ENCODE measurements at regions of chr1 and their contacts with region 1.

Region 1: DNA sequence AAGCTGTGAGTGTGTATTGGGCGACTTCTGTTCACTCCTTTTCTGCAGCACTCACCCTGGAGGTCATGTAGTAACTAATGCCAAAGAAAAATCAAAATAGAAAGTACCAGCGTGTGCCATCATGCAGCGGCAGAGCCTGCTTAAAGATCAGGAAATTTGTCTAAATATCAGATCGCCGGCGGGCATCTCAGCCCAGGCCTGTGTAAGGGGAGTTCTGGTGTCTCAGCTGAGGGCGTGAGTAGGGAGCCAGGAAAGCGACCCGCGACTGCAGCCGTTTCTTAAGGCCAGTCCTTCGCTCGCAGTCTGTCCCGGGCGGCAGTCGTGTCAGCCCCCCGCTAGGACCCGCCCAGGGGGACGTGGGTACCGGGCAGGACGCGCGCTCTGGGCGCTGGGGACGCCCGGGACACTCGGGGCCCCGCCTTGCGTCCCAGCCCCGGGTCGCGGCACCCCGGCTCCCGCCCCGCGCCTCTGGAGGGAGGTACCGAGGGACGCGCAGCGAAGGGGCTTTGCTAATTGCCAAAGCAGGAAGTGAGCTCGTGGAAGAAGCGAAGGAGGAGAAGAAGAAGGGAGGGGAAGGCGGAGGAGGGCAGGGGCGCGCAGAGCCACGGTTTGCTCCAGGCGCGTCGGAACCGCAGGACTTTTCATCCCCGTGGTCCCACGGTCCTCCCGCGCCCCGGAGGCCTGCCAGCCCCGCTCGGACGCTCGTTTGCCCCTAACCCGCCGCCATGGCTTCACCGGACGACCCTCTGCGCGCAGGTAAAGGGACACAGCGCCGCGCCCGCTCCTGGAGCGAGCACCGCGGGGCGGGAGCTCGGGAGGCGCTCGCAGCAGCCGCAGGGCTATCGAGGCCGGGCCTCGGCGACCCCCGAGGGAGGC is 1.1 kb downstream of the EDARADD start:
- DNase-seq: peak in 4 of 5 donors; percentile 40 to 81 (median 60)
- H3K4me3 ChIP-seq: peak overlapping the region; percentile 79
- H3K4me3 Mint-ChIP-seq: peak overlapping the region; percentile 89 to 99 (median 95)
- H3K27ac ChIP-seq: peak overlapping the region; percentile 82
- H3K27ac Mint-ChIP-seq: peak overlapping the region; percentile 68 to 99 (median 96)
- H3K4me1 ChIP-seq: peaks cover 17% of the 10 kb centered on the region
- H3K4me1 Mint-ChIP-seq: peaks cover 38 to 55% (median 51%) of the 10 kb centered on the region in 3 donors
- H3K27me3 ChIP-seq: no peaks in the 10 kb centered on the region
- H3K27me3 Mint-ChIP-seq: peaks cover 0 to 29% of the 10 kb centered on the region in 2 donors

Region 2: DNA sequence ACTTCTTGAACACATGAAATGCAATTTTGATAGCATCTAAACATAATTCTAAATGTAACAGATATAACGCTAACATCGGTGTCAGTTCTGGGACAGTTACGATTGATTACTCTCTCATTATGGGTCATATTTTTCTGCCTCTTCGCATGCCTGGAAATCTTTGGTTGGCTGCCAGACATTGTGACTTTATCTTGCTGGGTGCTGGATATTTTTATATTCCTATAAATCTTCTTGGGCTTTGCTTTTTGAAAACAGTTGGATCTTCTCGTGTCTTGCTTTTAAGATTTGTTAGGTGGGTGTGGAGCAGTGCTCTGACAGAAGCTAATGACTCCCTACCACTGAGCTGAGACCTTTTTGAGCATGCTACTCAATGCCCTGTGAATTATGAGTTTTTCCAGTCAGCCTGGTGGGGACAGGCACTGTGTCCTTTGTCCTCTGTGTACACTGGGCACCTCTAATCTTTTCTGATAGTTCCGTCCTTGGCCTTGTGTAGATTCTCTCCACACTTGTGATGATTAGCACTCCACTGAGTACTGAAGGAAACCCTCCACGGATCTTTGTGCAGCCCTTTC is 29.1 kb before region 1 on chr1:
- CTCF ChIA-PET with region 1: no interaction called
- POLR2A ChIA-PET with region 1: no interaction called
- DNase-seq: no peak
- H3K4me3 ChIP-seq: no peak overlapping the region
- H3K4me3 Mint-ChIP-seq: no peak overlapping the region
- H3K27ac ChIP-seq: no peak overlapping the region
- H3K27ac Mint-ChIP-seq: peak overlapping the region in 1 of 8 donors; percentile 44
- H3K4me1 ChIP-seq: no peaks in the 10 kb centered on the region
- H3K4me1 Mint-ChIP-seq: no peaks in the 10 kb centered on the region
- H3K27me3 ChIP-seq: no peaks in the 10 kb centered on the region
- H3K27me3 Mint-ChIP-seq: peaks cover 0 to 1% of the 10 kb centered on the region in 2 donors

Region 3: DNA sequence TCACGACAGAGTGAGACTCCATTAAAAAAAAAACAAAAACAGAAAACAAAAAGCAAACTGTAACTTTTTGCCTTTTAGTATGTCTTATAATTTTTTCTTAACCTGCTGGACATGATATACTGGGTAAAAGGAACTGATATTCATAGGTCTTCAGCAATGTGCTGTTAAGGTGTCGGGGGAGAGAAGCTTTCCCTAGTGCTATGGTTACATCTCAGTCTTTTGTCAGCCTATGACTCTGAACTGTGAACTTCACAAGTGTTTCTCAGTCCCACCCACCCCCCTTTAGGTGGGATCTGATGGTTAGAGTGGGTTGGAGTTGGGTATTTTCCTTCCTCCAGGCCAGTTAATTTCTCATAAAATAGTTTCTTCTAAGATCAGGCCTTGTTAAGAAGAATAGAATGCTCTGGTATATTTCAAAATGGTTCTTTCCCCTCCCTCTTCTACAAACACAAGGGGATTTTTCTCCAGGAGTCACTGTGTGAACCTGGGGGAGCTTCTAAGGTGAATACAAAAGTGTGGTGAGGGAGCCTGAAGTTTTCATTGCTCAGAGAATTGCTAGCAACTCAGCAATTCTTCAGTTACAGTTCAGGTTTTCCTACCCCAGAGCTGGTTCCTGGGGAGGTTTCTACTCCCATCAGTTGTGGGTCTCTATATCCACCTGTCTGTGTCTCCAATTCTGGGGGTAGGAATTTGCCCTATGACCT is 17.2 kb before region 1 on chr1:
- CTCF ChIA-PET with region 1: interaction called, 3 read pairs
- POLR2A ChIA-PET with region 1: interaction called, 14 read pairs
- DNase-seq: no peak
- H3K4me3 ChIP-seq: no peak overlapping the region
- H3K4me3 Mint-ChIP-seq: no peak overlapping the region
- H3K27ac ChIP-seq: no peak overlapping the region
- H3K27ac Mint-ChIP-seq: peak overlapping the region in 1 of 8 donors; percentile 29
- H3K4me1 ChIP-seq: no peaks in the 10 kb centered on the region
- H3K4me1 Mint-ChIP-seq: peaks cover 0 to 13% (median 8%) of the 10 kb centered on the region in 3 donors
- H3K27me3 ChIP-seq: no peaks in the 10 kb centered on the region
- H3K27me3 Mint-ChIP-seq: peaks cover 3 to 20% of the 10 kb centered on the region in 2 donors

Region 4: GRCh38 chr1:236416165-236416564 is 21.0 kb after region 1 on chr1:
- CTCF ChIA-PET with region 1: interaction called, 11 read pairs
- POLR2A ChIA-PET with region 1: interaction called, 16 read pairs
- DNase-seq: peak; percentile 31 to 85 (median 43)
- H3K4me3 ChIP-seq: peak overlapping the region; percentile 54
- H3K4me3 Mint-ChIP-seq: peak overlapping the region; percentile 66 to 89 (median 84)
- H3K27ac ChIP-seq: peak overlapping the region; percentile 93
- H3K27ac Mint-ChIP-seq: peak overlapping the region; percentile 96 to 100 (median 99)
- H3K4me1 ChIP-seq: peaks cover 20% of the 10 kb centered on the region
- H3K4me1 Mint-ChIP-seq: peaks cover 33 to 45% (median 33%) of the 10 kb centered on the region in 3 donors
- H3K27me3 ChIP-seq: no peaks in the 10 kb centered on the region
- H3K27me3 Mint-ChIP-seq: no peaks in the 10 kb centered on the region

Measured in CD8-positive, alpha-beta memory T cell (primary cell).